ENCODE measurements at regions of chr5 and their contacts with region 1.

Region 1: DNA sequence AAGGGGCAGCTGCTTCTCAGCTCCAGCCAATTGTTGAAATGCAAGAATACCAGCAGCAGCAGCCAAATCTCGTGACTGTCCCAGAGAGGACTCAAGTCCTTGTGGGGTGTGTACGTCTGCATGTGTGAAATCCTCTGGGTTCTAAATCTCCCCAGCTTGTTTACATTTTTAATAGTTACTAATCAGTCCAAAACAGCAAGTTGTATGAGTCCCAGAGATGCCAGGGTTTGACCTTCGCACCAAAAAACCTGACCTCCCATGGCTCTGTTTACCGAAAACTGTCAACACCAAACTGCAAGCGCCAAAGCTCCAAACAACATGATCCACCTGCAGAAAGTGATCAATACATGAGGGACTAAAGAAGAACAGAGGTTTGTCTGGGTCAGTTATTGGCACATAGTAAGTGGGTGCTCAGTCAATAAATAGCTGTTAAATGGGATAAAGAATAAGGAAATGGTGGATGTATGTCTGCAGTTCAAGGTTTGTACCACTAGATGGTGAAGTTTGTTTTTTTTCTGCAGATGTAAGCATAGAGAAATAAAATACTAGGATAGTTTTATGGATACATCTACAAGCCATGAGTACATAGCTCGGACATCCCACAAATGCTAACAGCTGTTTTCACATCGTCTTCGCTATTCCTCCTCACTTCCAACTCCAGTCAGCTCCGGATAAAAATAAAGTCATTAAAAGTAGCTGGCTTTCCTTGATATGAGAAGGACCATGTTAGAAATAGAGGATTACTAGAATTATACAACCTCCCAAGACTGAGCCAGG is 85.3 kb upstream of the ADRB2 start:
- DNase-seq: no peak
- H3K4me3 Mint-ChIP-seq: no peak overlapping the region
- H3K27ac Mint-ChIP-seq: no peak overlapping the region
- H3K4me1 Mint-ChIP-seq: peaks cover 2% of the 10 kb centered on the region
- H3K27me3 Mint-ChIP-seq: peaks cover 15% of the 10 kb centered on the region

Region 2: DNA sequence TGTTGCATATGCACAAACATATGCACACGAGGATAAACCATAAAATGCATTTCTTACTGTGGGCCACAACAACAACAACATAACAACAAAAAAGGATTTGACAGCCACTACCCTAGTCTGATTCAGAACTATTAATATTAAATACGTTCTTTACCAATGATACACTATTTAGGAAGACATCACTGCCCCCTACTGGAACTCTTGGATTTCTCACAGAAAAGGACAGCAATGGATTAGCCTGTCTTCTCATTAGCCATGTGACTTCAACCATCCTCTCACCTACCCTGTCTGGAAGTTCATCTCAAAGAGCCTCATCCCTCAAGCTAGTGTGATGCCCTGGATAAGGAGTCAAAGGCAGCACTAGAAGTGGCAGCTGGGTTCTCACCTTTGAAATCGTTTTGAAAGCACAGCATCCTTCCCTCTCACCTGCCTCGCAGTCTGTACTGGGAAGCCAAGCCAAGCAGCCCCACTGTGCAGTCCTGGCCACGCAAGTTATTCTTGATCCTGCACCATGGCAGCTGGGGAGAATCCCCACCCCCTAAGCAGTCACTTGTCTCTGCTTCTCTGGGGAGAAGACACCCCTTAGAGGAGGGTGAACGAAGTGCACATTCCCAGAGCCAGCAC is 257.1 kb after region 1 on chr5:
- CTCF ChIA-PET with region 1: interaction called, 15 read pairs
- DNase-seq: peak; percentile 35
- H3K4me3 Mint-ChIP-seq: no peak overlapping the region
- H3K27ac Mint-ChIP-seq: no peak overlapping the region
- H3K4me1 Mint-ChIP-seq: no peaks in the 10 kb centered on the region
- H3K27me3 Mint-ChIP-seq: peaks cover 18% of the 10 kb centered on the region

Measured in activated naive CD4-positive, alpha-beta T cell treated with anti-CD3 and anti-CD28 coated beads, Interleukin-2, amount 10 ng/mL, durations not matched to agents 7 days and 5 days (primary cell).